IMR-90 (cell line): ENCODE measurements at regions of chr12 and their contacts with region 1.

Region 1: DNA sequence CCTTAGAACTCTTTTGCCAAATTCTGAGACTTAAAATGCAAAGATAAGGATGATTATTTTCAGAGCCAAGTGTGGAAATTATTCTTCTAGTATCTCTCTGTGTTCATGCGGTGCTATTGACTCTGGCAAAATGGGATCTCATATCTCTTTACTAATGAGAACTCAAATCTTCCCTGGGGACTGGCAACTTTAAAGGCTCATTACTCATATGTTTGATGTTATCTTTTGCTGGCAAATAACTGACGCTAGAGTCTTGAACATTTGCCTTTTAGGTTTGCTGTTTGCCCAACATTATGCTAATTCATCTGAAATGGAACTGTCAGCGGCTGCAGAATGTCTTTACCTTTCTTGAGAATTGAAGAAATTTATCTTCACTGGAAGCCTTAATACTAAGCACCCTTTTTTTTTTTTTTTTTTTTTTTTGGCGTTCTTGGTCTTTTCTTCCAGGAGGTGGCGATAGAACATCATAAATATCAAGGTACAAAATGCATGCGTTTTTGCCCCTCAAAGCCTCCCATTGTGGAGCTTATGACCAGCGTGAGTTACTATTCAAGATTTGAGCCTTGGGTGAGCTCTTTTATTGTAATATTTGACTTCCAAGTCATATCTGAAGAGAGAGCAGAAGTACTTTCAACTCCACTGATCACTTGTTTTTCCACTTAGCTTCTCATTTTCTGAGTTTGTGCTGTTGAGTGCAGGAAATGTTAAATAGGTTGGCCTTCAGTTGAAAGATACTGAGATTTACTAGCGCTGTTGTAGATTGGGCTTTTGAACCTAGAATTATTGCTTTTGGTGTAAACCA is 86.6 kb downstream of the CAND1 start:
- DNase-seq: peak; percentile 69
- ATAC-seq: 0 out of 2 replicates have a peak, but pooled peaks have one; percentile 24
- H3K4me3 ChIP-seq: no peak overlapping the region
- H3K27ac ChIP-seq: no peak overlapping the region
- H3K4me1 ChIP-seq: peaks cover 3% of the 10 kb centered on the region
- H3K27me3 ChIP-seq: no peaks in the 10 kb centered on the region
- CTCF ChIP-seq: peak; percentile 75
- POLR2A ChIP-seq: no peak
- RAD21 ChIP-seq: peak; percentile 80

Region 2: DNA sequence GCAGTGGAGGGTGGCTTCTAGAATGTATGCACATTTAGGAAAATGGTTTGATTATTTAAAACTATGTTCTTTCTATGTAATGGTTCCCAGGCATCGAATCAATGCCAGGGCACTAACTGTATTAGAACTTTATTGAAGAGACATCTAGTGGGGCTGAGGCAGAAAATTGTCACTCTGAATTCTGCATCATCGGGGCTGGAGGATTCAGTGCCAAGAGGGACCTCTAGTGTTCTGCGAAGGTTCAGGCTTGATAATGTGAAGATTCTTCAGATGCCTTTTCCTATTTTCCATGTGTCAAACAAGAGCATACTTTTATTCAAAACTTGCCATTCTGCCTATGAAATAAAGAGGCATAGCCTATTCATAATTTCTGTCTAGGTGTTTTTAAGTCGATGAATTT is 59.7 kb after region 1 on chr12:
- CTCF ChIA-PET with region 1: interaction called, 5 read pairs
- POLR2A ChIA-PET with region 1: no interaction called
- dilution Hi-C with region 1: no loop called
- in situ Hi-C with region 1: no loop called
- intact Hi-C with region 1: loop called (anchors 2 kb)
- DNase-seq: peak; percentile 27
- ATAC-seq: peak; percentile 73
- H3K4me3 ChIP-seq: no peak overlapping the region
- H3K27ac ChIP-seq: no peak overlapping the region
- H3K4me1 ChIP-seq: peaks cover 2% of the 10 kb centered on the region; the same call in 1 of the 2 replicates
- H3K27me3 ChIP-seq: no peaks in the 10 kb centered on the region; the same call in 1 of the 2 replicates
- CTCF ChIP-seq: peak; percentile 53
- POLR2A ChIP-seq: no peak
- RAD21 ChIP-seq: peak; percentile 54

Region 3: DNA sequence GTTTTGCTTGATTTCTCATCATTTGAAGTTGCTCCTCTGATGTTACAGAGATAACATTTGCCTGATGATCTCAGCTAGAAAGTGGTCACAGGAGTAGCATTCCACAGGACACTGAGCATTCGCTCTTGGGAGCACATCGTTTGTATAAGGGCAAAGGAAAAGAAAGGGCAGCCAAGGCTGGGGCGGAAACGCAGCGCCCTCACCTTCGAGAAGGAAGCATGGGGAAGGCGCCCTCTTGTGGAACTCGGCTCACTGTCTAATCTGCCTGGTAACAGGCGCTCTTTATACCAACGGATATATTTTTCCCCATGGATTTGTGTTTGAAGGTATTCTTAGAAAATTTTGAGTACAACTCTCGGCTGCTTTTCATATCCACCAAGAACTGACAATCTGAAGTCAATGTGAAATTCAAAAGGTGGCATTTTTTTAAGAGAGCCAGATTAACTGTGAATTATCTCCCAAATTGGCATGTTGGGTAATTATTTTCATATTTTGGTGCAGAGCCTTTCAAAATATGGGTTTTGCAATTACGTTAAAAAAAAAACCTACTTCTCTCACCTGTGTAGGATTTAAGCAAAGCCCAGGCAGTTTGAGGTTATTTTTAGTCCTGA is 86.1 kb after region 1 on chr12:
- CTCF ChIA-PET with region 1: interaction called, 5 read pairs
- POLR2A ChIA-PET with region 1: no interaction called
- dilution Hi-C with region 1: no loop called
- in situ Hi-C with region 1: loop called (anchors 5 kb)
- intact Hi-C with region 1: loop called (anchors 1 kb)
- DNase-seq: peak; percentile 77
- ATAC-seq: peak; percentile 98
- H3K4me3 ChIP-seq: no peak overlapping the region
- H3K27ac ChIP-seq: no peak overlapping the region
- H3K4me1 ChIP-seq: no peaks in the 10 kb centered on the region
- H3K27me3 ChIP-seq: no peaks in the 10 kb centered on the region
- CTCF ChIP-seq: peak; percentile 92
- POLR2A ChIP-seq: no peak
- RAD21 ChIP-seq: peak; percentile 89

Region 4: DNA sequence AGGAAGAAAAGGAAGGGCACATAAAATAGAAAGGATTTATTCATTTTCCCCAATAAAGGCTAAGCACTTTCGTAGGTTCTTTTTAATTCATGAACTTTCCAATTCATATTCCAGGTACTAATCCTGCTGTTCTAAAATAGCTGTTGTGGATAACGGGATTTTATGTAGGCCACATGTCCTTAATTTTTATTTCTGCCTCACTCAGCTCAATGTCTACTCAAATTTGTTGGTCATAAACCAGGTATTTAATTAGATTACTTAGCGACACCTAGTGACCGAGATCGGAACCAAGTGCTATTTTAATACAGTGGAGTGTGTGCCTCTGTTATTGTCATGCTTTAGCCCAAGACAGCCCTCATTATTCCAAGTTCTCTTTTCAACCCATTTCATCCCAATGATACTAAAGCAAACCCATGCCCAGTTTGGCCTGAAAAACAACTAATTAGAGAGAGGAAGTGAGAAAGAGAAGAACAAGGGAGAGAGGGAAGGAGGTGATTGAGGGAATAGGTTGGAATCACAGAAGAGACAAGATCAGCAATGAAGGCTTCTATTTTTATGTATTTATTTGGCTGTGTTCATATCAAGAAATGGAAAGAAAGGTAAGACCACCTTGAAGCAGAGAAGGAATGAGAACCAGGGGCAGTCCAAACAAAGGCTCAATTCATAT is 587.6 kb after region 1 on chr12:
- CTCF ChIA-PET with region 1: interaction called, 5 read pairs
- POLR2A ChIA-PET with region 1: no interaction called
- dilution Hi-C with region 1: no loop called
- in situ Hi-C with region 1: loop called (anchors 5 kb)
- intact Hi-C with region 1: loop called (anchors 1 kb)
- DNase-seq: peak; percentile 74
- ATAC-seq: peak; percentile 93
- H3K4me3 ChIP-seq: no peak overlapping the region
- H3K27ac ChIP-seq: no peak overlapping the region
- H3K4me1 ChIP-seq: peaks cover 4% of the 10 kb centered on the region; the same call in 1 of the 2 replicates
- H3K27me3 ChIP-seq: peaks cover 2% of the 10 kb centered on the region; the same call in 1 of the 2 replicates
- CTCF ChIP-seq: peak; percentile 79
- POLR2A ChIP-seq: no peak
- RAD21 ChIP-seq: peak; percentile 80

Region 5: GRCh38 chr12:68223083-68223747 is 867.4 kb after region 1 on chr12:
- CTCF ChIA-PET with region 1: no interaction called
- POLR2A ChIA-PET with region 1: no interaction called
- dilution Hi-C with region 1: no loop called
- in situ Hi-C with region 1: no loop called
- intact Hi-C with region 1: loop called (anchors 5 kb)
- DNase-seq: peak; percentile 89
- ATAC-seq: peak; percentile 97
- H3K4me3 ChIP-seq: peak overlapping the region; percentile 17; the same call in 1 of the 2 replicates
- H3K27ac ChIP-seq: no peak overlapping the region
- H3K4me1 ChIP-seq: peaks cover 2% of the 10 kb centered on the region; the same call in 1 of the 2 replicates
- H3K27me3 ChIP-seq: no peaks in the 10 kb centered on the region
- CTCF ChIP-seq: peak; percentile 95
- POLR2A ChIP-seq: 0 out of 2 replicates have a peak, but pooled peaks have one; percentile 46
- RAD21 ChIP-seq: peak; percentile 99

Region 6: DNA sequence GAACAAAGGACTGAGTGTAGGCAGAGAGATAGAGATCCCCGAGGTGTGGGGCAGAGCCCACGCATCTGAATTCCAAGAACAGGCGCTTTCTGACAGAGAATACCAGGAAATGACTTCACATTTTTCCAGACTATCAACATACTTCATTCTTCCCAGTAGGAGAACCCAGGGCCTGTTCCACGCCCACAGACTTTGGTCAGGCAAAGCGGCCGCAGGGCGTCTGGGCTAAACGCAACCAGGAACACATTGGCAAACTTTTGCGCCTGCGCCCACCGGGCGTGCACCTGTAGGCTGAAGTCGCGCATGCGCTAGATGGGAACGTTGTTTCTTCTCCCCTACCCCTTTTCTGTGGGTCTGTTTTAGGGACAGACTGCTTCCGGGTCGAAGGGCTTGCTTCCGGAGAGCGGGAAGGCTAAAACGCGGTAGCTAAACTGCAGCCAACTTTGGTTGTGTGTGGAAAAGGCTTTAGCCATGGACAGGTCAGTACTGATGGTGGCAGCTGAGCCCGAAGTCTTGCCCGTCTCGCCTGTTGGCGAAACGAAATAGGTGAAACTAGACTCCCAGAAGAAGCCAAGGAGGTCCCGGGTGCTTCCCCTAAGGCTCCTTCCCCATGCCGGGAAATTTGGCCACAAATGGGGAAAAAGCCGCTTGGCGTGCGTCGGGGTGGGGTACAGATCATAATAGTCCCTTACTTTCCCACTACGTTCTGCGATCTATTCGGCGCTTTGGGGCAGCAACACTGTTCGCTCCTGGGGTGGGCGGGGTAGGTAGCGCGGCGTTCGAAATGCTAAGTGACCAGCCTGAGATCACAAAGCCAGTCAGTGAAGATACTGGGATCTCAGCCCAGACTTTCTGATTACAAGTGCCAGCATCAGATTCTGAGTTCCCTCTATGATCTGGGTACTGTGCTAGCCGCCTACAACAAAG is 1331.1 kb after region 1 on chr12 and contains the start of gene NUP107:
- CTCF ChIA-PET with region 1: no interaction called
- POLR2A ChIA-PET with region 1: interaction called, 11 read pairs
- dilution Hi-C with region 1: no loop called
- in situ Hi-C with region 1: no loop called
- intact Hi-C with region 1: no loop called
- DNase-seq: peak; percentile 99
- ATAC-seq: peak; percentile 96
- H3K4me3 ChIP-seq: peak within 1 kb of the TSS; percentile 66
- H3K27ac ChIP-seq: peak within 1 kb of the TSS; percentile 45
- H3K4me1 ChIP-seq: no peaks in the 10 kb centered on the region; the same call in 1 of the 2 replicates
- H3K27me3 ChIP-seq: no peaks in the 10 kb centered on the region
- CTCF ChIP-seq: peak; percentile 36; the same call in 1 of the 2 replicates
- POLR2A ChIP-seq: peak; percentile 66
- RAD21 ChIP-seq: 0 out of 2 replicates have a peak, but pooled peaks have one; percentile 23
- total RNA-seq, gene NUP107: 54.4 and 69.7 TPM in 2 replicates